ENCODE measurements at regions of chr17 and their contacts with region 1.

Region 1: DNA sequence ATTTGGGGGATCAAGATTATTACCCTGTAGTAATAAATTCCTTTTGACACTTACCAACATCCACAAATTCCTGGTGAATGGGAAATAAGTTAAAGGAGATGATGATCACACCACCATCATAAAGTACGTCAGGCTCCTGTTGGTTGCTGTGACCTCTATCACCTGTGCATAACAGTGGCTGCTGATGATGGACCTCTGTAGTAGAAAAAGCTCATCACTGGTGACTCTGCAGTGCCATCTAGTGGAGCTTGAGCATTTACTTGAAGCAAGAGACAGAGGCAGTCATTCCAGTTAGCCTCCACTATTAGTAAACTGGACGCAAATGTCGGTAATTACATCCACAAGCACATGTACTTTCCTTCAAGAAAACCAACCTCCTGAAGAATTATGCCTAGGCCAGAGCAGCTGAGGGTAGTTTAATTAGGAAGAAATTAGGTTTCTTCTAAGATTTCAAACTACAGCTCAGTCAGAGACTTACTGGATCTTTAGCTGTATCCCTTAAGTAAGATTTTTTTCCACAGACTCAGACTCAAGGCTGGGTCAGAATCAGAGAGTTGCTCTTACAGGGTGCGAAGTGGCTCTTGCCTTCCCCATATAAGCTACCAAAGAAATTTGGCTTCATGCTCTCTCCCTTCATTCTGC is 39.3 kb downstream of the CYB561 start:
- DNase-seq: peak; percentile 81
- ATAC-seq: peak; percentile 80
- H3K4me3 Mint-ChIP-seq: no peak overlapping the region
- H3K27ac Mint-ChIP-seq: peak overlapping the region; percentile 39
- H3K4me1 Mint-ChIP-seq: peaks cover 8% of the 10 kb centered on the region
- H3K27me3 Mint-ChIP-seq: no peaks in the 10 kb centered on the region

Region 2: DNA sequence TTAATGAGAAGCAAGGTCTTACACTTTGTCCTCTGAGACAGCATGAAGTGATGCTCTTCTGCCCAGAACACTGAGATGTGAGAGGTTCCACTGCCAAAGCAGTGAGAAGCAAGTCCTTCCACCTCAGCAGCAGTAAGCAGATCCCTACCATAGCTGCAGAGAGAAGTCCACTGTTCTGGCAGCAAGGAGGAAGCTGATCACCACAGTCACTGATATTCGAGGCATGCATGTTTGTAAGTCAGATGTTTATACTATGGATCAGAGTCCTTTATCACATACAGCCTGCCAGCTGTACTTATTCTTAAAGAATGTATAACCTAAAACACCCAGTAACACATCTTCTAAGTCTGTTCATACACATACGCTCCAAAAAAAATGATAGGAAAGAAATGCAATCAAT is 1001.4 kb before region 1 on chr17:
- CTCF ChIA-PET with region 1: no interaction called
- POLR2A ChIA-PET with region 1: no interaction called
- intact Hi-C with region 1: no loop called
- DNase-seq: no peak
- ATAC-seq: no peak
- H3K4me3 Mint-ChIP-seq: no peak overlapping the region
- H3K27ac Mint-ChIP-seq: no peak overlapping the region
- H3K4me1 Mint-ChIP-seq: no peaks in the 10 kb centered on the region
- H3K27me3 Mint-ChIP-seq: peaks cover 19% of the 10 kb centered on the region

Region 3: GRCh38 chr17:62562656-62563055 is 844.2 kb before region 1 on chr17:
- CTCF ChIA-PET with region 1: no interaction called
- POLR2A ChIA-PET with region 1: no interaction called
- intact Hi-C with region 1: loop called in 1 of 2 experiments (anchors 10 kb)
- DNase-seq: no peak
- ATAC-seq: no peak
- H3K4me3 Mint-ChIP-seq: no peak overlapping the region
- H3K27ac Mint-ChIP-seq: no peak overlapping the region
- H3K4me1 Mint-ChIP-seq: peaks cover 29% of the 10 kb centered on the region
- H3K27me3 Mint-ChIP-seq: no peaks in the 10 kb centered on the region

Region 4: DNA sequence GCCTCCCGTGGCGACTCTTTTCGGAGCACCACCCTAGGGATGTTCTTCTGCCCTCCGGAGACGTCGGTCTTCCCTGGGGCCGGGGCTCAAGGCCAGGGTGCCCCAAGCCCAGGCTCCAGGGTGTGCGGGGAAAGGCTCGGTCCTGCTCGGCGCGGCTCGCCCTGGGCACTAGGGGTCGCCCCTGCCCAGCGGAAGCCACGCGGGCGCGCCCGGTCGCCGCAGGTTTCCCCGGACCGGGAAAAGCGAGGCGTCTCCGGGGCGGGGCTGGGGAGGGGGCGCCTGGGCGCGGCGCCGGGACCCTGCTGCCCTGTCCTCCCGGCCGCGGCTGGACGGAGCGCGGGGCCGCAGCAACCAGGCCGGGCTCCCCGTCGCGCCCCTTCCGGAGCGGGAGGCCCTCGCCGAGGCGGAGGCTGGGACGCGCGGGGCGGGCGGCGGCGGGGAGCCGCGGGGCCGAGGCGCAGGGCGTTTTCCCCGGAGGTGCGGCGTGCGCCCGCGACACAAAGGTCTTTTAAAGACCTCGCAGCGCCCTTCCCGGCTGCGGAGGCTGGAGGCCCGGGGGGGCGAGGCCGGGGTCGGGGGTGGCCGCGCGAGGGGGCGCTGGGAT is 702.9 kb before region 1 on chr17:
- CTCF ChIA-PET with region 1: interaction called, 5 read pairs
- POLR2A ChIA-PET with region 1: no interaction called
- intact Hi-C with region 1: loop called (anchors 1 to 5 kb)
- DNase-seq: peak; percentile 81
- ATAC-seq: peak; percentile 92
- H3K4me3 Mint-ChIP-seq: peak overlapping the region; percentile 32
- H3K27ac Mint-ChIP-seq: no peak overlapping the region
- H3K4me1 Mint-ChIP-seq: peaks cover 6% of the 10 kb centered on the region
- H3K27me3 Mint-ChIP-seq: peaks cover 34% of the 10 kb centered on the region

Region 5: DNA sequence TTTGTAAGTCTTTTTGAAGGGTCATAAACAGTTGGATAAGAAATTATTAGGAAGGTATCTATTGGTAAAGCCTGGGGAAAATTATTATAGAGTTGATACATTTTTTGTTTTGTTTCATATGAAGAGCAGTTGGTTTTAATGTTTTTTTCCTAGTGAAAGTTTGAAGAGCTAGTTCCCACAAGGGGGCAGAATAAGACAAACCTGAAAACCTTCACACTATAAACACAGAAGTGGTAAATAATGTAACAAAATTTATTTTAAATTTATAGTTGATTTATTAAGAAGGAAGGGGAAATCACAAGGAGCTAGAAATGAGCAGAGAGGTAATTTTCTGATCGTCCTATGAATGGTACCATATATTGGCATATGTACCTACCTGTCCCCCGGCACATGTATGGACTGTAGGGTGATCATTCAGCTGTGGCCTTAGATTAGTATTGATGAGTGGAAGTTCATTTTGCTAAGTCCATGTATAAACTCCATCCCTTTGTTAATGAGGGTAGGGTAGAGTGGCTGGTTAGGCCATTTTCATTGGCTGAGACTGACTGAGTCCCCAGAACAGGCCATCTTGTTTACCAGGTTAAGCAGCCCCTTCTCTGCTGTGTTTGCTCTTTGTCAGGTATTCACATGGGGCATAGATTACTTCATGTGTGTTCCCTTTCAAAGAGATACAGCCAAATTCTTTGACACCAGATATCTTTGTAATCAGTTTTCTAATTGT is 324.4 kb before region 1 on chr17:
- CTCF ChIA-PET with region 1: interaction called, 40 read pairs
- POLR2A ChIA-PET with region 1: no interaction called
- intact Hi-C with region 1: loop called (anchors 1 to 2 kb)
- DNase-seq: no peak
- ATAC-seq: no peak
- H3K4me3 Mint-ChIP-seq: no peak overlapping the region
- H3K27ac Mint-ChIP-seq: no peak overlapping the region
- H3K4me1 Mint-ChIP-seq: no peaks in the 10 kb centered on the region
- H3K27me3 Mint-ChIP-seq: no peaks in the 10 kb centered on the region

Region 6: DNA sequence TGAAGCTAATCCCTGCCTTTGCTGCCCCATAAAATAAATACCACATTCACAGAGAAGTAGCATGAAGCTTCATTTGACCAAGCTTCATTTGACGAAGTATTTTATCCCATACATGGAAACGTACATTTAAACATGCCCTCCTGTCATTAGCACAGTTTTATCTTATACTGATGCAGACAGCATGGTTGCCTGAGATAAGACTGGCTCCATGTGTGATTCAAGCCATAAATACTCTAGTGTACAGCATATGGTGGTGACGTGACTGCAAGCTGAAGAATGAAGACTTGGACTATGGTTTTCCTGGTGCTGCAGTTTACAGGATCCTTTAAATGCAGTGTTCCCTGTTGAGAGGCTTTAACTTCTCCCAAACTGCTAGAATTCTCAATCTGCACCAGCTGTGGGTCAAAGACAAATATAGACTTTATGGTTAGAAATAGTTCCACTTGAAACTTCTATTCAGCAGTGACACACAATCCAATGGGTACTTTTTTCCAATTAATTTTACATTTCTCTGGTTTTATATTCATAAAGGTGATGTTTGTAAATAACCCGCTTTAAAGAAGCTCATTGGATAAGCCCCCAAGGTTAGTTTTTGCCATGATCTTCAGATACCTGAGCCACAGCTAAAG is 25.6 kb before region 1 on chr17:
- CTCF ChIA-PET with region 1: interaction called, 10 read pairs
- POLR2A ChIA-PET with region 1: no interaction called
- intact Hi-C with region 1: no loop called
- DNase-seq: no peak
- ATAC-seq: no peak
- H3K4me3 Mint-ChIP-seq: no peak overlapping the region
- H3K27ac Mint-ChIP-seq: no peak overlapping the region
- H3K4me1 Mint-ChIP-seq: peaks cover 2% of the 10 kb centered on the region
- H3K27me3 Mint-ChIP-seq: no peaks in the 10 kb centered on the region

Region 7: GRCh38 chr17:63419949-63420867 is 13.4 kb after region 1 on chr17:
- CTCF ChIA-PET with region 1: interaction called, 25 read pairs
- POLR2A ChIA-PET with region 1: no interaction called
- intact Hi-C with region 1: no loop called
- DNase-seq: peak; percentile 67
- ATAC-seq: peak; percentile 68
- H3K4me3 Mint-ChIP-seq: no peak overlapping the region
- H3K27ac Mint-ChIP-seq: peak overlapping the region; percentile 75
- H3K4me1 Mint-ChIP-seq: peaks cover 12% of the 10 kb centered on the region
- H3K27me3 Mint-ChIP-seq: no peaks in the 10 kb centered on the region

Region 8: GRCh38 chr17:63478791-63479494 is 72.1 kb after region 1 on chr17:
- CTCF ChIA-PET with region 1: interaction called, 17 read pairs
- POLR2A ChIA-PET with region 1: no interaction called
- intact Hi-C with region 1: no loop called
- DNase-seq: peak; percentile 89
- ATAC-seq: peak; percentile 92
- H3K4me3 Mint-ChIP-seq: no peak overlapping the region
- H3K27ac Mint-ChIP-seq: no peak overlapping the region
- H3K4me1 Mint-ChIP-seq: peaks cover 12% of the 10 kb centered on the region
- H3K27me3 Mint-ChIP-seq: peaks cover 27% of the 10 kb centered on the region